Naive thymus-derived CD4-positive, alpha-beta T cell (primary cell): ENCODE measurements at regions of chr1 and their contacts with region 1.

Region 1: GRCh38 chr1:10904396-10905358 is 107.8 kb upstream of the TARDBP start:
- DNase-seq: peak in 6 of 9 donors; percentile 37 to 62 (median 56)
- ATAC-seq: peak; percentile 69
- H3K4me3 ChIP-seq: no peak overlapping the region
- H3K4me3 Mint-ChIP-seq: peak overlapping the region in 9 of 10 donors; percentile 45 to 85 (median 75)
- H3K27ac ChIP-seq: no peak overlapping the region
- H3K27ac Mint-ChIP-seq: peak overlapping the region in 8 of 9 donors; percentile 20 to 94 (median 72)
- H3K4me1 ChIP-seq: peaks cover 12 to 32% of the 10 kb centered on the region in 2 donors
- H3K4me1 Mint-ChIP-seq: peaks cover 3 to 47% (median 35%) of the 10 kb centered on the region in 7 donors
- H3K27me3 ChIP-seq: no peaks in the 10 kb centered on the region
- H3K27me3 Mint-ChIP-seq: peaks cover 0 to 15% (median 0%) of the 10 kb centered on the region in 5 donors

Region 2: GRCh38 chr1:10074059-10074851 is 830.4 kb before region 1 on chr1:
- CTCF ChIA-PET with region 1: no interaction called
- POLR2A ChIA-PET with region 1: no interaction called
- intact Hi-C with region 1: no loop called
- DNase-seq: peak in 1 of 9 donors; percentile 66
- ATAC-seq: peak; percentile 86
- H3K4me3 ChIP-seq: no peak overlapping the region
- H3K4me3 Mint-ChIP-seq: peak overlapping the region in 1 of 10 donors; percentile 32
- H3K27ac ChIP-seq: no peak overlapping the region
- H3K27ac Mint-ChIP-seq: peak overlapping the region in 4 of 9 donors; percentile 4 to 53 (median 44)
- H3K4me1 ChIP-seq: peaks cover 0 to 8% of the 10 kb centered on the region in 2 donors
- H3K4me1 Mint-ChIP-seq: peaks cover 10 to 19% (median 14%) of the 10 kb centered on the region in 7 donors
- H3K27me3 ChIP-seq: no peaks in the 10 kb centered on the region
- H3K27me3 Mint-ChIP-seq: no peaks in the 10 kb centered on the region

Region 3: DNA sequence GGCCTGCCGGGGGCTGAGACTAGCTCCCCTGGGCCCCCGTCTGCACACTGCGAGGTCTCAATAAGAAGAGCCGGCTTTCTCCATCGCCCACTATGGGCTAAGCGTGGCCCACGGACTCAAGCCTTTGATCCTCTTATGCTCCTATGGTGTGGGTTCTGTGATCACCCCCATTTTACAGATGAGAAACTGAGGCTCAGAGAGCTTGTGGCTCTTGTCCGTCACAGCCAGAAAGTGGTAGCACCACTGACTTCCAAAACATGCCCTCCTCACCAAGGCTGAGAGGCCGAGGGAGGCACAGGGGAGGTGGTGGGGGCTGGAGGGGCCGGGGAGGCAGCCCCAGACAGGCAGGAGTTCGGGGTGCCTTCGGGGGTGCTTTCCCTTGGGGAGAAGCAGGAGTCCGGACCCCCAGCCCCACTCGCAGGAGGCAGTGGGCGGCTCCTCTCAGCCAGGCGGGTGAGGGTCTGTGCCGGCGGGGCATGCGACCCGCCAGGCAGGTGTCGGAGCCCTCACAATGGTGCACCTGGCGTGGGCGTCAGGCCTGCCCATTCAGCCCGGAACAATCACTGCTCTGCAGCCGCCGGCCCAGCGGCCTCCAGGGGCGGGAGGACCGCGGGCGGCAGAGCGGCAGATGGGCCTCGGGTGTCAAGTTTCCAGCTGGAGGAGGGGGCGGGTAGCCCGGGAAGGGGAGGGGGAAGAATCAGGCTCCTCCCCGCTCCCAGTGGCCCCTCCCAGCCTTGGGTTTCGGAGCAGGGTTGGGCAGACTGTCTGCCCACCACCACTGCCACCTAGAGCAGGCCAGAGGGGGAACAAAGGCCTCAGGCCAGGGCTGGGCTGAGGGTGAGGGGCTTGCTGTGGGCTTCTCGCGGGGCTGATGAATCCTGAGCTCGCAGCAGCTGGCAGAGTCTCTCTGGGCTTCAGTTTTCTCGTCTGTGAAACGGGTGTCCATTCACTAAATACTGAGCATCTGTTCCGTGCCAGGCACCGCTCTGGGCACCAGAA is 69.0 kb before region 1 on chr1:
- CTCF ChIA-PET with region 1: no interaction called
- POLR2A ChIA-PET with region 1: no interaction called
- intact Hi-C with region 1: no loop called
- DNase-seq: no peak
- ATAC-seq: no peak
- H3K4me3 ChIP-seq: no peak overlapping the region
- H3K4me3 Mint-ChIP-seq: no peak overlapping the region
- H3K27ac ChIP-seq: no peak overlapping the region
- H3K27ac Mint-ChIP-seq: no peak overlapping the region
- H3K4me1 ChIP-seq: no peaks in the 10 kb centered on the region
- H3K4me1 Mint-ChIP-seq: peaks cover 0 to 6% (median 0%) of the 10 kb centered on the region in 7 donors
- H3K27me3 ChIP-seq: peaks cover 0 to 3% of the 10 kb centered on the region in 2 donors
- H3K27me3 Mint-ChIP-seq: peaks cover 15 to 46% (median 35%) of the 10 kb centered on the region in 5 donors

Region 4: DNA sequence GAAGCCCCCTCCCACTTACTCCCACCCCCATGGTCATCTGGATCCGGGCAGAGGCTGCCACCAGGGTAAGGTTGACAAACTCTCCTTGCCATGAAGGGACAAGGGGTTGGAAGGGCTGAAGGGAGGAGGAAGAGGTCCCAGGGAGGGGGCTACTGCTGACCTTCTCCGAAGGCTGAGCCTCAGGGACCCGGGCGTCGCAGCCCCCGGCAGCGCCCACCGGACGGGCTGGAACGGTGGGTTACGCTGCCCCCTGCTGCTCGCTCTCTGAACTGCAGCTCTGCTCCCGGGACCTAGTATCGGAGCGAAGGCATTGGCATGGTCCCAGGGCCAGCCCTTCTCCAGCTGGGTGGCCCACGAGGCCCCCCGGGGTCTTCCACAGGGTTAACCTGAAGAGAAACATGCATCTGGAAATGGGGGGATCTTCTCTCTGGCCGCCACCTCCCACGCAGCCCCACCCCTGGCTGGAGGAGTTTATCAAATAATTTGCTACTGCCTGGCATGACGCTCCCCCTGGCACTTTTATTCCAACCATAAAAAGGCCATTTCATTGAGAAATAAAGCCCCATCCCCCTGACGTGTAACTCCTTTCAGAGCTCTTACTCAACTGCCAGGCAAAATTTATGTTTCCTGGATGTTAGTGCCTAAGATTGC is 37.3 kb after region 1 on chr1:
- CTCF ChIA-PET with region 1: no interaction called
- POLR2A ChIA-PET with region 1: interaction called, 3 read pairs
- intact Hi-C with region 1: loop called in 1 of 2 experiments (anchors 1 kb)
- DNase-seq: peak; percentile 23 to 75 (median 53)
- ATAC-seq: peak; percentile 78
- H3K4me3 ChIP-seq: no peak overlapping the region
- H3K4me3 Mint-ChIP-seq: peak overlapping the region in 1 of 10 donors; percentile 21
- H3K27ac ChIP-seq: no peak overlapping the region
- H3K27ac Mint-ChIP-seq: no peak overlapping the region
- H3K4me1 ChIP-seq: peaks cover 11 to 29% of the 10 kb centered on the region in 2 donors
- H3K4me1 Mint-ChIP-seq: peaks cover 20 to 49% (median 32%) of the 10 kb centered on the region in 7 donors
- H3K27me3 ChIP-seq: no peaks in the 10 kb centered on the region
- H3K27me3 Mint-ChIP-seq: peaks cover 19 to 72% (median 21%) of the 10 kb centered on the region in 5 donors

Region 5: DNA sequence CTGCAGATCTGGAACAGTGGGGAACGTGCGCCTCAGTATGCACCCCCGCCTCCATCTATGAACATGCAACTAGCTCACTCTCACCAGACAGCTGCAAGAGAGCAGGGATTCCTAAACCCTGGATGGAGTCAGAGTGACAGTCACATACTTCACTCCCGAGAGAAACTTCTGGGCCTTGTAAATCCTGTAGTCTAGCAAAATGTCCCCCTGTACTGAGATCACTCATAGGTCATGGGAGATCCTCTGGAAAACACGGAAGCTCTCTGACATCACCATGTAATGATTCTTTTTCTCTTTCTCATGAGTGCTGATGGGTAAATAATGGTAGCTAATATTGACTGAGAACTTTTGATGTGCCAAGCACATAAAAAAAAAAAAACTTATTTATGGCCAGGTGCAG is 84.4 kb after region 1 on chr1:
- CTCF ChIA-PET with region 1: no interaction called
- POLR2A ChIA-PET with region 1: no interaction called
- intact Hi-C with region 1: no loop called
- DNase-seq: no peak
- ATAC-seq: no peak
- H3K4me3 ChIP-seq: no peak overlapping the region
- H3K4me3 Mint-ChIP-seq: no peak overlapping the region
- H3K27ac ChIP-seq: no peak overlapping the region
- H3K27ac Mint-ChIP-seq: no peak overlapping the region
- H3K4me1 ChIP-seq: no peaks in the 10 kb centered on the region
- H3K4me1 Mint-ChIP-seq: peaks cover 0 to 5% (median 0%) of the 10 kb centered on the region in 7 donors
- H3K27me3 ChIP-seq: no peaks in the 10 kb centered on the region
- H3K27me3 Mint-ChIP-seq: peaks cover 0 to 7% (median 0%) of the 10 kb centered on the region in 5 donors